T-cell (primary cell): ENCODE measurements at regions of chr12 and their contacts with region 1.

Region 1: DNA sequence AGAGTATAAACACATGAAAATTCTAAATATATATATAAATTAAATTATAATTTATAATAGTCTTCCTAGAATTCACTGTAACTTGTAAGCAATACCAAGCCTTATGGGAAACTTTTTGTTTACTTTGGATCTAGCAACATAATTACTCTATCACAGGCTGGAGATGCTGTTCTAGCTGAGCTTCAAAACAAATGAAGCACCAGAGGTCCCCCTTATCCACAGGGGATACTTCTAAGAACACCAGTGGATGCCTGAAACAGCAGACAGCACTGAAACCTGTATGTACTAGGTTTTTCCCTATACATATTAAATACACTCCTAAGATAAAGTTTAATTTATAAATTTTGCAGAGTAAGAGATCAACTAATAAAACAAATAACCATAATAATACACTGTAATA is 96.6 kb downstream of the CDK17 start:
- DNase-seq: no peak
- ATAC-seq: no peak
- H3K4me3 ChIP-seq: no peak overlapping the region
- H3K4me3 Mint-ChIP-seq: no peak overlapping the region
- H3K27ac ChIP-seq: no peak overlapping the region
- H3K27ac Mint-ChIP-seq: no peak overlapping the region
- H3K4me1 ChIP-seq: peaks cover 0 to 5% of the 10 kb centered on the region in 2 experiments
- H3K4me1 Mint-ChIP-seq: peaks cover 20 to 24% (median 24%) of the 10 kb centered on the region in 3 donors
- H3K27me3 ChIP-seq: no peaks in the 10 kb centered on the region
- H3K27me3 Mint-ChIP-seq: no peaks in the 10 kb centered on the region

Region 2: GRCh38 chr12:95970905-95971304 is 332.7 kb before region 1 on chr12:
- CTCF ChIA-PET with region 1: no interaction called
- POLR2A ChIA-PET with region 1: interaction called in 1 of 2 experiments, 10 read pairs
- DNase-seq: no peak
- ATAC-seq: no peak
- H3K4me3 ChIP-seq: no peak overlapping the region
- H3K4me3 Mint-ChIP-seq: no peak overlapping the region
- H3K27ac ChIP-seq: no peak overlapping the region
- H3K27ac Mint-ChIP-seq: no peak overlapping the region
- H3K4me1 ChIP-seq: no peaks in the 10 kb centered on the region
- H3K4me1 Mint-ChIP-seq: no peaks in the 10 kb centered on the region
- H3K27me3 ChIP-seq: no peaks in the 10 kb centered on the region
- H3K27me3 Mint-ChIP-seq: no peaks in the 10 kb centered on the region

Region 3: GRCh38 chr12:96177013-96177412 is 126.6 kb before region 1 on chr12:
- CTCF ChIA-PET with region 1: no interaction called
- POLR2A ChIA-PET with region 1: interaction called in 1 of 2 experiments, 10 read pairs
- DNase-seq: peak in 2 of 35 experiments; percentile 15 to 38
- ATAC-seq: peak; percentile 66 to 92 (median 81)
- H3K4me3 ChIP-seq: no peak overlapping the region
- H3K4me3 Mint-ChIP-seq: no peak overlapping the region
- H3K27ac ChIP-seq: no peak overlapping the region
- H3K27ac Mint-ChIP-seq: peak overlapping the region; percentile 80 to 83
- H3K4me1 ChIP-seq: peaks cover 6 to 9% of the 10 kb centered on the region in 2 experiments
- H3K4me1 Mint-ChIP-seq: peaks cover 6 to 12% (median 9%) of the 10 kb centered on the region in 3 donors
- H3K27me3 ChIP-seq: no peaks in the 10 kb centered on the region
- H3K27me3 Mint-ChIP-seq: no peaks in the 10 kb centered on the region

Region 4: GRCh38 chr12:96194971-96195844 is 108.4 kb before region 1 on chr12:
- CTCF ChIA-PET with region 1: interaction called in 1 of 2 experiments, 3 read pairs
- POLR2A ChIA-PET with region 1: interaction called, 8 to 12 read pairs
- DNase-seq: peak; percentile 32 to 90 (median 70)
- ATAC-seq: peak; percentile 67 to 77 (median 70)
- H3K4me3 ChIP-seq: peak overlapping the region; percentile 76 to 93
- H3K4me3 Mint-ChIP-seq: peak overlapping the region; percentile 98 to 100 (median 99)
- H3K27ac ChIP-seq: peak overlapping the region; percentile 90
- H3K27ac Mint-ChIP-seq: peak overlapping the region; percentile 99
- H3K4me1 ChIP-seq: peaks cover 25 to 30% of the 10 kb centered on the region in 2 experiments
- H3K4me1 Mint-ChIP-seq: peaks cover 53 to 54% (median 54%) of the 10 kb centered on the region in 3 donors
- H3K27me3 ChIP-seq: no peaks in the 10 kb centered on the region
- H3K27me3 Mint-ChIP-seq: no peaks in the 10 kb centered on the region

Region 5: GRCh38 chr12:96383991-96384390 is 80.3 kb after region 1 on chr12:
- CTCF ChIA-PET with region 1: interaction called in 1 of 2 experiments, 3 read pairs
- POLR2A ChIA-PET with region 1: interaction called in 1 of 2 experiments, 14 read pairs
- DNase-seq: no peak
- ATAC-seq: no peak
- H3K4me3 ChIP-seq: no peak overlapping the region
- H3K4me3 Mint-ChIP-seq: peak overlapping the region in 2 of 3 donors; percentile 3 to 4
- H3K27ac ChIP-seq: no peak overlapping the region
- H3K27ac Mint-ChIP-seq: peak overlapping the region; percentile 16 to 76
- H3K4me1 ChIP-seq: peaks cover 2 to 34% of the 10 kb centered on the region in 2 experiments
- H3K4me1 Mint-ChIP-seq: peaks cover 81 to 86% (median 83%) of the 10 kb centered on the region in 3 donors
- H3K27me3 ChIP-seq: no peaks in the 10 kb centered on the region
- H3K27me3 Mint-ChIP-seq: no peaks in the 10 kb centered on the region